ENCODE measurements at regions of chr7 and their contacts with region 1.

Region 1: GRCh38 chr7:39949980-39950472 is at the start of gene CDK13:
- DNase-seq: peak; percentile 91
- CTCF ChIP-seq: no peak

Region 2: DNA sequence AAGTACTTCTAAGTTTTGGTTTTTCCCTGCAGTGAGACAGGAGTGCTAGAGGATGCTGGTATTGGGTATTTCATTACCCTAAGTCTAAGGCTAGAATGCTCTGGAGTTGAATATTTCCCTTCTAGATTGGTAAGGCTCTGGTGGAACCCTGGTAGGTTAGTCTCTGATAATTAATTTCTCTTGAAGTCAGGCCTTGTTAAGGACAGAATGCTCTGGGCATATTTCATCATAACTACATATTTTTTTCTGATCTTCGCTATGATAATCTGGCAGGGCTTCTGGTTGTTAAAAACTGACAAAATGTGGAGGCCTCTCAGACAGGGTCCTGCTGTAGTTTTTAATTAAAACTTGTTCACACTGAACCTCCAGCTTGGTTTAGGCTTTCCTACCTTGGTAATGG is 83.8 kb after region 1 on chr7:
- in situ Hi-C with region 1: no loop called
- DNase-seq: no peak
- CTCF ChIP-seq: no peak

Region 3: GRCh38 chr7:40047661-40048060 is 97.6 kb after region 1 on chr7:
- in situ Hi-C with region 1: loop called (anchors 10 kb)
- DNase-seq: no peak
- CTCF ChIP-seq: no peak

Region 4: GRCh38 chr7:40541336-40541735 is 591.3 kb after region 1 on chr7:
- in situ Hi-C with region 1: no loop called
- DNase-seq: no peak
- CTCF ChIP-seq: no peak